ENCODE measurements at regions of chr10 and their contacts with region 1.

Region 1: GRCh38 chr10:69839696-69840345 is 38.1 kb downstream of the COL13A1 start:
- DNase-seq: no peak
- H3K4me3 Mint-ChIP-seq: no peak overlapping the region
- H3K27ac Mint-ChIP-seq: no peak overlapping the region
- H3K4me1 Mint-ChIP-seq: peaks cover 13% of the 10 kb centered on the region
- H3K27me3 Mint-ChIP-seq: peaks cover 77% of the 10 kb centered on the region
- CTCF ChIP-seq: no peak

Region 2: GRCh38 chr10:69949770-69950169 is 109.9 kb after region 1 on chr10:
- CTCF ChIA-PET with region 1: interaction called, 15 read pairs
- intact Hi-C with region 1: no loop called
- DNase-seq: no peak
- H3K4me3 Mint-ChIP-seq: no peak overlapping the region
- H3K27ac Mint-ChIP-seq: no peak overlapping the region
- H3K4me1 Mint-ChIP-seq: no peaks in the 10 kb centered on the region
- H3K27me3 Mint-ChIP-seq: peaks cover 100% of the 10 kb centered on the region
- CTCF ChIP-seq: no peak